ENCODE measurements at regions of chr1 and their contacts with region 1.

Region 1: DNA sequence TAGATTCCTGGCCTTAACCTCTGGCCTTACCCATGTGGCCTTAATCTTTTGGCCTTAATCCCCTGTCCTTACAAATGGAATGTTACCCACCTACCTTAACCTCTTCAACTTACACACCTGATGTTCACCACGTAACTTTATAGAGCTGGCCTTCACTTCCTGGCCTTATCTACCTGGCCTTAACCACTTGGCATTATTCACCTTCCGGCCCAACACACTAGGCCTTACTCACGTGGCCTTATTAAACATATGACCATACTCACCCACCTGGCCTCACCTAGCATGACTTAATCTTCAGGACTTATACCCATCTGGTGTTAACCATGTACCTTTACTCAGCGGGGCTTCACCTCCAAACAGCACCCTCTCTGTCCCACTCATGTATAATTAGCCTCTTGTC is 41.7 kb downstream of the EXOC8 start:
- DNase-seq: no peak
- ATAC-seq: no peak
- H3K4me3 ChIP-seq: no peak overlapping the region
- H3K27ac ChIP-seq: no peak overlapping the region
- H3K4me1 ChIP-seq: no peaks in the 10 kb centered on the region
- H3K27me3 ChIP-seq: no peaks in the 10 kb centered on the region
- CTCF ChIP-seq: no peak
- POLR2A ChIP-seq: no peak

Region 2: GRCh38 chr1:231248778-231249177 is 47.2 kb before region 1 on chr1:
- intact Hi-C with region 1: loop called in 1 of 10 experiments (anchors 5 kb)
- DNase-seq: no peak
- ATAC-seq: no peak
- H3K4me3 ChIP-seq: no peak overlapping the region
- H3K27ac ChIP-seq: no peak overlapping the region
- H3K4me1 ChIP-seq: peaks cover 0 to 8% (median 0%) of the 10 kb centered on the region in 12 donors
- H3K27me3 ChIP-seq: no peaks in the 10 kb centered on the region
- CTCF ChIP-seq: no peak
- POLR2A ChIP-seq: no peak